HepG2 (cell line): ENCODE measurements at regions of chr19 and their contacts with region 1.

Region 1: GRCh38 chr19:5891938-5892771 is 11.4 kb downstream of the NDUFA11 start:
- DNase-seq: no peak
- ATAC-seq: peak; percentile 81
- H3K4me3 ChIP-seq: peak overlapping the region in 1 of 3 experiments; percentile 14; a peak in 1 of 6 replicates
- H3K27ac ChIP-seq: no peak overlapping the region
- H3K4me1 ChIP-seq: peaks cover 44% of the 10 kb centered on the region
- H3K27me3 ChIP-seq: no peaks in the 10 kb centered on the region
- CTCF ChIP-seq: peak; percentile 98
- EP300 ChIP-seq: no peak
- POLR2A ChIP-seq: peak in 1 of 2 experiments; percentile 68; a peak in 2 of 4 replicates
- RAD21 ChIP-seq: peak; percentile 98

Region 2: DNA sequence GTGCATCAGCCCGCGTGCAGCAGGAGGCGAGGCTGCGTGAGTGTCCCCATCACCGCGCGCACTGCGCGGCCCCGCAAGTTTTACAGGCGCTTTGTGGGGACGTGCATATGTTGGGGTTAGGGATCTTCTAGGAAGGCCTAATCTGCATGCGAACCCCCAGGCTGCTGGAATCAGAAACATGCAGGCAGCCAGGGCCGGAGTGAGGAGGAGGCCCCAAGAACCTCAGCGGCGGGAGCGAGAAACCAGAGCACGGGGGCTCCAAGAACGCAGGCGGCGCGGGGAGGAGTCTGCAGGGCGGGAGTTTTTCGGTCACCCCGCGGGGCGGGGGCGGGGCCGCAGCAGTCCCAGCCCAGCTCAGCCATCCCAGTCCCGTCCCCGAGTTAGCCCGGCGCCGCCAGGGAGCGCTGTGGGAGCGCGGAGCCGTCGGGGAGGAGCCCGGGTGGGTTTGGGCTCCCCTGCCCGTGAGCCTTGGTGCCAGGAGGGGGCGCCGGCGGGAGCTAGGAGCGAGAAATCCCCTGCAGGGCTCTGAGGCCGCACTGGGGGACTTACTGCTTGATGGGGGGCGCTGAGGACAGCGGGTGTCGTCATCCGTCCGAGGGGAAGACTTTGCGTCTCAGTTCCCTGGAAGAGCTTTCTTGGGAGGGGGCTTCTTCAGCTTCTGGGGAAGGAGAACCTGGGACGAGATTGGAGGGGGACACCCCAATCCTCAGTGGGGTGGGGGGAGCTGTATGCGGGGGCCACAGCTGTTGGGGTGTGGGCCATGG is 88.2 kb before region 1 on chr19:
- CTCF ChIA-PET with region 1: interaction called, 71 read pairs
- POLR2A ChIA-PET with region 1: interaction called, 9 read pairs
- in situ Hi-C with region 1: loop called (anchors 5 kb)
- intact Hi-C with region 1: loop called (anchors 1 kb)
- DNase-seq: peak; percentile 83
- ATAC-seq: peak; percentile 88
- H3K4me3 ChIP-seq: peak overlapping the region; percentile 36 to 68 (median 42)
- H3K27ac ChIP-seq: no peak overlapping the region
- H3K4me1 ChIP-seq: peaks cover 67% of the 10 kb centered on the region
- H3K27me3 ChIP-seq: no peaks in the 10 kb centered on the region; a peak in 1 of 5 replicates
- CTCF ChIP-seq: peak; percentile 99
- EP300 ChIP-seq: peak; percentile 7 to 25; a peak in 1 of 4 replicates
- POLR2A ChIP-seq: peak in 1 of 2 experiments; percentile 42; a peak in 1 of 4 replicates
- RAD21 ChIP-seq: peak; percentile 100

Region 3: DNA sequence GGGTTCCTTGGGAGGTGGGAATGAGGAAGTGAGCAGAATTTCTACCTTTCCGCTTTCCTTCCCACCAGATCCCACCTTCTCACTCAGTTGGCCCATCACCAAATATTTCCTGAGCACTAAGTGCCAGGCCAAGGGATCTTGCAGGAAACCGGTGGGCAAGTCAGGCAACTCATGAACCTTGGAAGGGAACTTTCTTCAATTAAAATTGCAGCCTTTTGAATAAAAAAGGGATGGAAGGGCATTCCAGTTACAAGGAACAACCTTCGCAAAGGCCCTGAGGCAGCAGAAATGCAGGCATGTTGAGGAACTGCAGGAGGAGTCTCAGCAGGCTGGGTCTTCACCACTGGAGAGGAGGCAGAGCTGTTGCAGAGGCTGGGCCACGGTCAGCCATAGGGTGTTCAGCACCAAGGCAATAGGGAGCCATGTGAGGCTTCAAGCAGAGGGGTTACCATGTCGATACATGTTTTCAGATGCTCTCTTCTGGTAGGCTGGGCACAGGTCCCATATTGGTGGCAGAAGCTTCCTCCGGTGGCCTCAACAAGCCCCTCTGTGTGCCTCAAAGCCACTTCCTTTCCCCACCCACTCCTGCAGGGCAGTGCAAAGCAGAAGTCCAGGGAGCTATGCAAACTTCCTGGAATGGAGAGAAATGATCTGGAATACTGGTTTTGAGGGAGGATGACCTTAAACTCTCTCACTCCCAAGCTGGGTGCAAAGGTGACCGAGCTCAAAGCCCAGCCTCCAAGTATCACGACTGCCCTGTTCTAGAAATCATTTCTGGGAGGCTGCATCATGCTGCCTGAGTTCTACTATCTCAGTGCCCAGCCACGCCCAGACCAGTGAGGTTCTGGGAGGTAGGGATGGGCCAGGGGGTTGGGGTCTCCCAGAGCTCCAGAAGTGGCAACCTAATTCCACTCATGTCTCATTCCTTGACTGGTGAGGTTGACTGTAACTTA is 52.8 kb before region 1 on chr19 and contains the start of gene FUT6:
- CTCF ChIA-PET with region 1: no interaction called
- POLR2A ChIA-PET with region 1: interaction called, 4 read pairs
- in situ Hi-C with region 1: loop called (anchors 5 kb)
- intact Hi-C with region 1: no loop called
- DNase-seq: peak; percentile 59
- ATAC-seq: peak; percentile 70
- H3K4me3 ChIP-seq: peak within 1 kb of the TSS; percentile 69 to 84 (median 75)
- H3K27ac ChIP-seq: peak within 1 kb of the TSS; percentile 80
- H3K4me1 ChIP-seq: peaks cover 58% of the 10 kb centered on the region
- H3K27me3 ChIP-seq: no peaks in the 10 kb centered on the region; a peak in 1 of 5 replicates
- CTCF ChIP-seq: 0 out of 2 replicates have a peak, but pooled peaks have one; percentile 6
- EP300 ChIP-seq: 0 out of 4 replicates have a peak, but pooled peaks of 1 of the 2 experiments have one; percentile 55
- POLR2A ChIP-seq: peak in 1 of 2 experiments; percentile 63; a peak in 2 of 4 replicates
- RAD21 ChIP-seq: no peak
- total RNA-seq, gene FUT6: 5.0 and 8.2 TPM in 2 replicates

Region 4: GRCh38 chr19:5870986-5871394 is 21.2 kb before region 1 on chr19:
- CTCF ChIA-PET with region 1: no interaction called
- POLR2A ChIA-PET with region 1: interaction called, 4 read pairs
- in situ Hi-C with region 1: no loop called
- intact Hi-C with region 1: loop called (anchors 2 kb)
- DNase-seq: peak; percentile 97
- ATAC-seq: peak; percentile 92
- H3K4me3 ChIP-seq: 0 out of 6 replicates have a peak overlapping the region, but pooled peaks of 1 of the 3 experiments have one; percentile 46
- H3K27ac ChIP-seq: peak overlapping the region; percentile 97
- H3K4me1 ChIP-seq: peaks cover 80% of the 10 kb centered on the region
- H3K27me3 ChIP-seq: no peaks in the 10 kb centered on the region
- CTCF ChIP-seq: peak; percentile 19; the same call in 1 of the 2 replicates
- EP300 ChIP-seq: peak; percentile 93 to 97
- POLR2A ChIP-seq: peak; percentile 55 to 56; a peak in 2 of 4 replicates
- RAD21 ChIP-seq: peak; percentile 47; the same call in 1 of the 2 replicates

Region 5: DNA sequence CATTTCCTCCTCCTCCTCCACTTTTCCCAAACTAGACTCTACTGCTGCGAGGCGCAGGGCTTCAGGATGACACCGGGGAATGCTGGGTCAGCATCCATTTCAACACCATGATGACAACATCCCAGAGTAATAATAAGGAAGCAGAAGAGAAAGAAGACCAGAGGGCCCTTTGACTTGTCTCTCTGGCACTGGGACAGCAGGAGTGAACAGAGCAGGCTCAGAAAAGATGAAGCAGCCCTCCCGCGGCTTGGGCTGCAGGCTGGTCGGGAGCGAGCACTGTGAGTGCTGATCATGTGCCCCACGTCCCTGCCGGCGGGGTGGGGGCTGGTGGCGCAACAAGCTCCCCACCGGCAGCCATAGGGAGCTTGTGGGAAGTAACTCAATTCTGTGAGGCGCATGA is 55.3 kb after region 1 on chr19:
- CTCF ChIA-PET with region 1: no interaction called
- POLR2A ChIA-PET with region 1: no interaction called
- in situ Hi-C with region 1: no loop called
- intact Hi-C with region 1: no loop called
- DNase-seq: no peak
- ATAC-seq: no peak
- H3K4me3 ChIP-seq: no peak overlapping the region
- H3K27ac ChIP-seq: no peak overlapping the region
- H3K4me1 ChIP-seq: peaks cover 17% of the 10 kb centered on the region
- H3K27me3 ChIP-seq: no peaks in the 10 kb centered on the region
- CTCF ChIP-seq: no peak
- EP300 ChIP-seq: no peak
- POLR2A ChIP-seq: no peak
- RAD21 ChIP-seq: no peak